ENCODE measurements at regions of chr7 and their contacts with region 1.

Region 1: DNA sequence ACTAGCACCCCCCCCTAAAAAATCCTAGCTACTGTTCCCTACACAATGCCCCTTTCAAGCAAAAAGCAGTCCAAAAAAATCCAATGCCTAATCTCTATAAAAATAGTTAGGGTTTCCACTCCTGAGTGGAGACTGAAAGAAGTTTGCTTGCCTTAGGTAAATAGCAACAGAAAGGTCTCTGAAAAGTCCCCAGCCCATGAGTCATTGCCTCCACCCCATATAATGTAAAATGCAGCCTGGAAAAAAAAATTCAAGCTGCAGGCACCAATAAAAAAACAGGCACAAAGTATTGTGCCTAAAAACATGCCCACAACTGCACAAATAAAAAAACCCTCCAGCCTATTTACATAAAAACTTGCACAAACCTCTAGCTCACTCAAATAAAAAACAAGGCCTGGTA is 47.5 kb downstream of the ZNF680 start:
- DNase-seq: no peak
- H3K4me3 ChIP-seq: no peak overlapping the region
- H3K27ac ChIP-seq: no peak overlapping the region
- H3K4me1 ChIP-seq: no peaks in the 10 kb centered on the region
- CTCF ChIP-seq: no peak

Region 2: GRCh38 chr7:64320547-64321513 is 194.5 kb before region 1 on chr7:
- CTCF ChIA-PET with region 1: no interaction called
- POLR2A ChIA-PET with region 1: interaction called, 4 read pairs
- intact Hi-C with region 1: loop called (anchors 10 kb)
- DNase-seq: peak; percentile 85
- H3K4me3 ChIP-seq: peak overlapping the region; percentile 58
- H3K27ac ChIP-seq: peak overlapping the region; percentile 89
- H3K4me1 ChIP-seq: peaks cover 68% of the 10 kb centered on the region
- CTCF ChIP-seq: peak; percentile 79

Region 3: DNA sequence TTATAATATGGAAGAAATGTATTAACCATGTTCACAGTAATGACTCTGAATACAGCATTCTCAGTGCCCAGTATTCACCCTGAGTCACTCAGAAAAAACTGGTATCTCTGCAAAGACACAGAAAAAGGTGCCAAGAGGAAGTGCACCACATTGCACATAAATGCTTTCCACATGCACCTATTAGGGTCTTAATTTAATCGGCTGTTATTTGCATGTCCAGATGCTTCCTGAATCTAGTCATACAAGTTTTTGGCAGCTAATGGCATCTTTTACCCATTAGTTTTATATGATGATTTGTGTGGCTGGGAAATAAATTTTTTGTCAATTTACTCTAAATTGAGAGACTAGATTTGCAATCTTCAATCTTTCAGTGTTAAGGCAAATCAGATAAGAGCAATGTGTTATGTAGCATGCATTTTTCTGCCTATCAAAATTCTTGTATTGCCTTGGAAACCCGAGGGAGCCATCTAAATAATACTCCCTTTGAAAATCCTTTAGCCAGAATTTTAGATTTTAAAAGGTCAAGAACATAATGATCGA is 10.7 kb before region 1 on chr7:
- CTCF ChIA-PET with region 1: no interaction called
- POLR2A ChIA-PET with region 1: interaction called, 18 read pairs
- intact Hi-C with region 1: no loop called
- DNase-seq: peak; percentile 36
- H3K4me3 ChIP-seq: no peak overlapping the region
- H3K27ac ChIP-seq: no peak overlapping the region
- H3K4me1 ChIP-seq: peaks cover 14% of the 10 kb centered on the region
- CTCF ChIP-seq: no peak

Region 4: GRCh38 chr7:64551375-64552142 is 36.2 kb after region 1 on chr7:
- CTCF ChIA-PET with region 1: no interaction called
- POLR2A ChIA-PET with region 1: interaction called, 5 read pairs
- intact Hi-C with region 1: loop called (anchors 5 kb)
- DNase-seq: no peak
- H3K4me3 ChIP-seq: no peak overlapping the region
- H3K27ac ChIP-seq: no peak overlapping the region
- H3K4me1 ChIP-seq: peaks cover 9% of the 10 kb centered on the region
- CTCF ChIP-seq: no peak